WTC11 (cell line): ENCODE measurements at regions of chr9 and their contacts with region 1.

Region 1: GRCh38 chr9:98998441-98999151 is 54.9 kb downstream of the COL15A1 start:
- DNase-seq: peak; percentile 88
- ATAC-seq: peak; percentile 92
- H3K4me3 Mint-ChIP-seq: no peak overlapping the region
- H3K27ac Mint-ChIP-seq: no peak overlapping the region
- H3K4me1 Mint-ChIP-seq: peaks cover 23% of the 10 kb centered on the region
- H3K27me3 Mint-ChIP-seq: peaks cover 6% of the 10 kb centered on the region
- CTCF ChIP-seq: peak; percentile 91

Region 2: GRCh38 chr9:98848450-98849149 is 150.0 kb before region 1 on chr9:
- CTCF ChIA-PET with region 1: interaction called, 42 read pairs
- POLR2A ChIA-PET with region 1: no interaction called
- DNase-seq: peak; percentile 91
- ATAC-seq: peak; percentile 99
- H3K4me3 Mint-ChIP-seq: no peak overlapping the region
- H3K27ac Mint-ChIP-seq: no peak overlapping the region
- H3K4me1 Mint-ChIP-seq: peaks cover 12% of the 10 kb centered on the region
- H3K27me3 Mint-ChIP-seq: no peaks in the 10 kb centered on the region
- CTCF ChIP-seq: peak; percentile 89

Region 3: DNA sequence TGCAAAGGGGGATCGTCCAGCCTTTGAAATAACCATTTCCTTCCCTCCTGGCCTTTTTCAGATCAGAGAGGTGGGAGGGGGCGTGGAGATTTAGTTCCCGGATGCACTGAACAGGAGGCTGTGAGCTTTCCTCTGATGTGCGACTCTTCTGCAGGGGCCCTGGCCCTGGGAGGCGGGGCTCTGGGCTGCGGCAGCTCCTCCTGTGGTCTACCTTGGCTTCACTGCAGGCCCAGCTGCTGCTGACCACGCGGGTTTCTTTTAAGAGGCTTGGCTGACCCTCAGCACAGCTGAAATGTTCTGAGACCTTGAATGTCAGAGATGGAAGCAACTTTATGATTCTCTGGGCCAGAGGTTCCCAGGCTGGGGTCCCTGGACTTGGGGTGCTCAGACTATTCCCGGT is 81.9 kb before region 1 on chr9:
- CTCF ChIA-PET with region 1: interaction called, 10 read pairs
- POLR2A ChIA-PET with region 1: no interaction called
- DNase-seq: peak; percentile 62
- ATAC-seq: peak; percentile 100
- H3K4me3 Mint-ChIP-seq: no peak overlapping the region
- H3K27ac Mint-ChIP-seq: no peak overlapping the region
- H3K4me1 Mint-ChIP-seq: peaks cover 9% of the 10 kb centered on the region
- H3K27me3 Mint-ChIP-seq: no peaks in the 10 kb centered on the region
- CTCF ChIP-seq: no peak

Region 4: DNA sequence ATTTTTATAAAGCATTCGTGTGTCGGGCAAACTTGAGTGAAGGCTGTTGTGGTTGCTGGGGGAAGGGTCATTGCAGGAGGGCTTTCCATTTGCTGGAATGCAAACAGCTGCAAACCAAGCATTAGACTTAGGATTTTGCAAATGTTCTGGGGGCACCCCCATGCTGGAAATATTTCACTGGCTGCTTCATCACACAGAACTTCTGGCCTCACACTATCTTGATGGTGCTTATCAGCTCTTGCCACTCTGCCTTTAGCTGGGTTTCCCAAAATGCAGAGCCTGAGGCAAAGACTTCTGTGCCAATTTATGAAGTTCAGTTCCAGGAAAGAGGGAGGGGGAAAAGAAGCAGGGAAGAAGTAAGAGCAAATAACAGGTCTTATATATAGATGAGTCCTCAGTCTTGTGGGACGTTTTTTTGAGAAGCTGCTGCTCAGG is 63.5 kb before region 1 on chr9:
- CTCF ChIA-PET with region 1: no interaction called
- POLR2A ChIA-PET with region 1: no interaction called
- DNase-seq: no peak
- ATAC-seq: no peak
- H3K4me3 Mint-ChIP-seq: no peak overlapping the region
- H3K27ac Mint-ChIP-seq: no peak overlapping the region
- H3K4me1 Mint-ChIP-seq: 0 out of 2 replicates have a peak, but pooled peaks cover under 1% of the 10 kb centered on the region
- H3K27me3 Mint-ChIP-seq: peaks cover 18% of the 10 kb centered on the region
- CTCF ChIP-seq: no peak

Region 5: DNA sequence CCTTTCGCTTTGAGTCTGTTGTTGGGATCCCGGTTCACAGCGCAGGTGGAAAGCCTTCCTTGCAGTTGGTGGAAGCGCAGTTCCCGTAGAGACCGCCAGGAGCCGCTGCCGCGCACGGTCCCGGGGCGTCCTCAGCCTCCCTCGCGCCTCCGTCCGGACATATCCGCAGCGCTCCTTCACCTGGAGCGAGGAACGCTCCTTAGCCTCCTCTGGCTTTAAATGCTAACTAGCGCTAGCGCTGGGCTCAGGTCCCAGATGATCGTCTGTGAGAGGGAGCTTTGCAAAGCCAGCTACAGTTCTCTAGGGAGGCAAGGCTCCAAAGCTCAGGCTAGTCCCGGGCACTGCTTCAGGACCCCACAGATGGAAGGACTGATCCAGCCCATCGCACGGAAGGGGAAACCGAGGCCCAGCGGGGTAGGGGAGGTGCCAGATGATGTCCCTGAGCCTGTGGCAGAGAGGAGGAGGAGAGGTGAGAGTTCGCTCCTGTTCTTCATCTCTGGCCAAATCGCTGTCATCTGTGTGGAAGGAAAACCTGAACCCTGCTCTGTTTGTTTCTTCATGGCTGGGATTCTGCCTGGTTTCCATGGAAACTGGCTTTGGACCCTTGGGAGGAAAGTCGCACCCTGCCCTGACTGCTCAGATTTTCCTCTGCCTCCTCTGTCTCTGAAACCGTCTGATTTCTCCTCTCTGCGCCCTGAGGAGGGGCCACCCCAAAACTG is 23.4 kb before region 1 on chr9:
- CTCF ChIA-PET with region 1: interaction called, 26 read pairs
- POLR2A ChIA-PET with region 1: no interaction called
- DNase-seq: peak; percentile 94
- ATAC-seq: peak; percentile 89
- H3K4me3 Mint-ChIP-seq: peak overlapping the region; percentile 8; the same call in 1 of the 2 replicates
- H3K27ac Mint-ChIP-seq: no peak overlapping the region
- H3K4me1 Mint-ChIP-seq: peaks cover 37% of the 10 kb centered on the region
- H3K27me3 Mint-ChIP-seq: peaks cover 33% of the 10 kb centered on the region
- CTCF ChIP-seq: peak; percentile 97

Region 6: DNA sequence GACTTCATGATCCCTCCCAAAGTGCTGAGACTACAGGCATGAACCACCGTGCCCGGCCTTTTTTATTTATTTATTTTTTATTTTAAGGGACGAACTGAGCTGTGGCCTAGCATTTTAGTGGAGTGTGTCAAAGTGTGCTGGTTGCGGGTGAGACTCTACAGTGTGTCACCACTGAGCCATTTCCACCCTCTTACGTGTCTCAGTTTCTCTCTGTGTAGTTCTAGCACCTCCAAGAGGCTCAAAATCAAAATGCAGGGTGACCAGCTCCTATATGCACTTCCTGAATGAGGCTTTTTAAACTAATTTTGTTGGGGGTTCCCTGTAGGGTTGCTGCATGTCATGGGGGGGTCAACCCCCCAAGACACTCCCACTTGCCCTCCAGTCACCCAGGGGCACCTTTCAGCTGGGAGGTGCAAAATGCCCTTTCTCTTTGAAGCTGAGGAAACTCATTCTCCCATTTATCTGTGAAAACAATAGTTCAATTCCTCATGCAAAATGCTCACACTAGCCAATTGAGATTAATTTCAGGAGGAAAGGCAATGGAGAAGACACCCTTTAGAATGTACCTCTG is 14.4 kb after region 1 on chr9:
- CTCF ChIA-PET with region 1: interaction called, 12 read pairs
- POLR2A ChIA-PET with region 1: no interaction called
- DNase-seq: no peak
- ATAC-seq: peak; percentile 41; the same call in 1 of the 2 replicates
- H3K4me3 Mint-ChIP-seq: no peak overlapping the region
- H3K27ac Mint-ChIP-seq: no peak overlapping the region
- H3K4me1 Mint-ChIP-seq: no peaks in the 10 kb centered on the region
- H3K27me3 Mint-ChIP-seq: peaks cover 6% of the 10 kb centered on the region
- CTCF ChIP-seq: no peak

Region 7: GRCh38 chr9:99140685-99141314 is 142.2 kb after region 1 on chr9:
- CTCF ChIA-PET with region 1: interaction called, 24 read pairs
- POLR2A ChIA-PET with region 1: interaction called, 3 read pairs
- DNase-seq: peak; percentile 55
- ATAC-seq: peak; percentile 97
- H3K4me3 Mint-ChIP-seq: no peak overlapping the region
- H3K27ac Mint-ChIP-seq: peak overlapping the region; percentile 4; the same call in 1 of the 2 replicates
- H3K4me1 Mint-ChIP-seq: peaks cover 4% of the 10 kb centered on the region
- H3K27me3 Mint-ChIP-seq: no peaks in the 10 kb centered on the region
- CTCF ChIP-seq: peak; percentile 55; the same call in 1 of the 2 replicates

Region 8: DNA sequence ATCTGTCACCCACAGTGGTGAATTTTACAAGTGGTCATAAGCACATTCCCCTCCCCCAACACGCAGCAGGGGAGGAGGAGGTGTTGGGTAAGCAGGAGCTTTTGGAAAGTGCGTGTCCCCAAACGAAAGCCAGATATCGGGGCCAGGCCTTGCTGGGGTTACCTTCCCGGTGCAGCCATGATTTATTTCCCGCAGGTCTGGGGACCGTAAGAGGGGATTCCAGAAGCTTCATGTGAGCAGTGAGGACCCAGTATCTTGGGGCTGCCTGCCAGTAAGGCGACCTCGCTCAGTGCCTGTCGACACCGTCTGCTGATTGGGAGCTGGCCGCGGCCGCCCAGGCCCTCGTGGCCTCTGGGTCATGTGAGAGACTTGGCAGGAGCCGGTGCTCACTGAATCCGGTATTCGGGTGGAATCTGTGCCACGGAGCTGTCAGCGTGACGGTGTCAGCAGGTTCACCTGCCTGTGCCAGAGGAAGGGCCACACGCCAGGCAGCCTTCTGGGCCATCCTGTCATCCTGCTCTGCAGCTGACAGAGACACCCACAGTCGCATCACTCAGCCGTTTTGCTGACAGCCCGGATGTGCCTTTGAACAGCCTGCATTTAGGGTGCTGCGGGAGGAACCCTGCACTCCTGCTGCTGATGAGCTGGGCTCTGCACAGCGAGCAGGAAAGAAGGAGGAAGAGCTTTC is 260.8 kb after region 1 on chr9:
- CTCF ChIA-PET with region 1: no interaction called
- POLR2A ChIA-PET with region 1: no interaction called
- DNase-seq: peak; percentile 23
- ATAC-seq: peak; percentile 62
- H3K4me3 Mint-ChIP-seq: no peak overlapping the region
- H3K27ac Mint-ChIP-seq: no peak overlapping the region
- H3K4me1 Mint-ChIP-seq: peaks cover 16% of the 10 kb centered on the region
- H3K27me3 Mint-ChIP-seq: no peaks in the 10 kb centered on the region
- CTCF ChIP-seq: no peak